CD8-positive, alpha-beta memory T cell (primary cell): ENCODE measurements at regions of chr11 and their contacts with region 1.

Region 1: DNA sequence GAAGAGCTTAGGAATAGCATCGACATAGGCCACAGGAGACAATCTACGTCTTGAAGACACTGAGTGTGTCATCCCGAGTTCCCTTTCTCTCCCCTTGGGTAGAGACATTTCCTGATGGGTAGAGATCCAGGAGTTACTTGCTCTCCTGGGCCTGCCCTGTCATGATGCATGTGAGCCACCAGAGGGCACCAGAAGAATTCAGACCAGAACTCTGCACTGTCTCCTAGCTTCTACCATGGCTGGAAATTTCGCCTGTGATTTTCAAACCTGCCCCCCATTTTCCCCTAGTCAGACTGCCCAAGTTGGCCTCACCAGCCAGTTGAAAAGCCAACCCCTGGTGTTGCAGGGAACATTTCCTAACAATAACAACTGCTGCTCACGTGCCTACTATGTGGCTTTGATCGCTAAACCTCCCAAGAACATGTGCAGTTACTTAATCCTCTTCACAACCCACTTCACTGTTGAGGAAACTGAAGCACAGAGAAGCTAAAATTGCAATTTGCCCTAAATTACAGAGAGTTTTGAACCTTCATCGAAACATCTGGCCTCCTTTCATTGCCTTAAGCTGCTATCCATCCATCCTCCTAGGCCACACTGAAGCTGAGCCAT is 47.2 kb downstream of the C11orf58 start:
- DNase-seq: peak; percentile 24 to 59 (median 30)
- H3K4me3 ChIP-seq: no peak overlapping the region
- H3K4me3 Mint-ChIP-seq: no peak overlapping the region
- H3K27ac ChIP-seq: no peak overlapping the region
- H3K27ac Mint-ChIP-seq: no peak overlapping the region
- H3K4me1 ChIP-seq: no peaks in the 10 kb centered on the region
- H3K4me1 Mint-ChIP-seq: peaks cover 0 to 3% (median 0%) of the 10 kb centered on the region in 3 donors
- H3K27me3 ChIP-seq: no peaks in the 10 kb centered on the region
- H3K27me3 Mint-ChIP-seq: no peaks in the 10 kb centered on the region

Region 2: DNA sequence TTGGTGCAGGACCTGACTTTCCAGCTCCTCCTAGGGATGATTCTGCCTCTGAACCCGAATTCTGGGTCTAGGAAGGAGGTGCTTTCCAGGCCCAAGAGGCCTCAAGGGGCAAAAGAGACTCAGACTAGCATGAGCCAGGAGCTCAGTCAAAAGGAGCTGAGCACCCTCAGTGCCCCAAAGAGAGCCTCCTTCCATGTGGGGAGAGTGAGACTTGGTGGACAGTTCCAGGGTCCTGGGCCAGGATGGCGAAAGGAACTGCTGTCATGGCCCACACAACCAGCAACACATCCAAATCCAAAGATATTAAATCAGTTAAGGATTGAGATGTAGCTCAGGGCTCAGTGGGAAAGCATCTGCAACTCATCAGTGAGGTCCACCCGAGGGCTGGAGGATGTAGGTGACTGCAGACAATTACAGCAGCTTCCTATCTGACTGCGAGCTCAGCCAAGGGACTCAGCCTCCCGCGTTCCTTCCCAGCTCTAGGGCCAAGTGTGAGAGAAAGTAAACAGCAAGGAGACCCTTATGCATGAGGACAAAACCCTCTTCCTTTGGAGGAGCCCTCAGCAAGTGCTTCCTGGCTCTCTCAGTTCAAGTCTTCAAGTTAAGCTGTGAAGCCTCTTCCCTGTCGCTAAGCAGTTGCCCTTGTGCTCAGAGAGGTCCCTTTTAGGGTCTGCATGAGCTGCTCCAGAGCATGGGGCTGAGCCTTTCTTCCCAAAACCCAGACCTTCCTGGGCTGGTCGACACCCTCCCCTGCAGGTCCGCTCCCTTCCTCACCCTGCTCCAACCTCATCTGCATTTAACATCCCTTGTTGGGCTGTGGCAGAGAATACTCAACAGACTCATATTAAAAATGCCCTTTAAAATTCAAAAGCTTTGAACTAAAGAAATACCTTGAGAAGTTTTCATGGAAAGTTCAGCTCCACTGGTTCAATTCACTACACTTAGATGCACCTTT is 11.4 kb before region 1 on chr11:
- CTCF ChIA-PET with region 1: interaction called, 12 read pairs
- POLR2A ChIA-PET with region 1: no interaction called
- DNase-seq: no peak
- H3K4me3 ChIP-seq: no peak overlapping the region
- H3K4me3 Mint-ChIP-seq: no peak overlapping the region
- H3K27ac ChIP-seq: no peak overlapping the region
- H3K27ac Mint-ChIP-seq: no peak overlapping the region
- H3K4me1 ChIP-seq: no peaks in the 10 kb centered on the region
- H3K4me1 Mint-ChIP-seq: no peaks in the 10 kb centered on the region
- H3K27me3 ChIP-seq: no peaks in the 10 kb centered on the region
- H3K27me3 Mint-ChIP-seq: peaks cover 1 to 12% of the 10 kb centered on the region in 2 donors

Region 3: DNA sequence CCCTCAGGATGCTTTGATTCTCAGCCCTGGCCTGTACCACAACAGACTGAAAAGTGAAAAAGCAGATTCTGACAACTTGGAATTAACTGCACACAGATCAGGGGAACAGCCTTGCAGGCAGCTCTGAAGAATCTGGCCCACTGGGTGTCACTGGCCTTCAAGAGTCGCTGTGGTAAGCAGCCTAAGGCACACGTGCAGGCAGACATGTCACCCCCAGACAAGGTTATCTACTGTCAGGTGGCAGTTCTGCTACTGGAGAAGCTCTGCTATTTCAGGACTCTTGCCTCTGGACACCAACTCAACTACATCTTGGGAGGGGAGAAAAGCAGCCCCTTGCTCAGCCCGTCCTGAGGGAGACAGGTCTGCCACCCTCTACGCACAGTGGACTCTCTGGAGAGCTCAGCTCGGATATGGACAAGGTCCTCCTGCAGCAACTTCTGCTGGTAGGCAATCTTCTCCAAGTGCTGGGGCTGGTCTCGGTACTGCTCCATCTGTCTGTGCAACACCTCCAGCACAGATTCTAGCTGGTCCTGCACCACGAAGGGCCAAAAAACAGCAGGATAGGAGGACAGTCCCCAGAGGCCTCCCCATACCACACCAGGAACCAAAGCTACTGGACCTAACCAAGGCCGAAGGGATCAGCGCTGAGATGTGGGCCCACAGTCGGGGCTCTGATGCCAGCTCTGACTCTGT is 15.8 kb after region 1 on chr11:
- CTCF ChIA-PET with region 1: interaction called, 12 read pairs
- POLR2A ChIA-PET with region 1: no interaction called
- DNase-seq: no peak
- H3K4me3 ChIP-seq: no peak overlapping the region
- H3K4me3 Mint-ChIP-seq: peak overlapping the region in 1 of 7 donors; percentile 20
- H3K27ac ChIP-seq: no peak overlapping the region
- H3K27ac Mint-ChIP-seq: peak overlapping the region in 5 of 8 donors; percentile 23 to 82 (median 69)
- H3K4me1 ChIP-seq: no peaks in the 10 kb centered on the region
- H3K4me1 Mint-ChIP-seq: peaks cover 0 to 27% (median 22%) of the 10 kb centered on the region in 3 donors
- H3K27me3 ChIP-seq: no peaks in the 10 kb centered on the region
- H3K27me3 Mint-ChIP-seq: peaks cover 1 to 12% of the 10 kb centered on the region in 2 donors